ENCODE measurements at regions of chr1 and their contacts with region 1.

Region 1: GRCh38 chr1:12040457-12041051 is 21.3 kb downstream of the MIIP start:
- DNase-seq: peak; percentile 96
- H3K4me3 ChIP-seq: peak overlapping the region; percentile 44
- H3K27ac ChIP-seq: peak overlapping the region; percentile 86
- H3K4me1 ChIP-seq: peaks cover 59% of the 10 kb centered on the region
- CTCF ChIP-seq: no peak

Region 2: DNA sequence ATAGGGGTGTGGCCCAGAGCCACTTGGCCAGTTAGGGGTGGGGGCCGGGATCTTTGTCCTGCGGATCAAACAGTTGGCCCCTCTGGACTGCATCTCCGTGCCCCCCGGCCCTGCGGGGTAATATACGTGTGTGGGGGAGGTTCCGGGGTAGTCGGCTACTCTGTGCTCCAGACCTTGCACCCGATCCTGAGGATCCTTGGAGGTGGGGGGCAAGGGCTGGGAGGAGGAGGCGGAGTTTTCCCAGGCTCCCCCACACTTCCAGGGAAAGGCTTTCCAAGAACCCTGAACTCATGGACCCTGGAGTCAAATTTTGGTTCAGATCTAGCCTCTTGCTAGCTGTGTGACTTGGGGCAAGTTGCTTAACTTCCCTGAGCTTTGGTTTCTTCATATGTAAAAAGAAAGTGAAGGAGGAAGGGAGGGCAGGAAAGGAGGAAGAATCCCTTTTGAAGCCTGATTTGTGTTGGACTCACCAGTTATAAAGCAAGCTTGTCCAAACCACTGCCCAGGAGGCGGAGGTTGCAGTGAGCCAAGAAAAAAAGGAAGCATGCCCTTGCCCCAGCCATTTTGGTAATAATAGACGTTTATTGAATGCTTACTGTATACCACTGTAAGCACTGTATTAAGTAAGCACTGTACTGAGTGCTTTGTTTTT is 20.6 kb before region 1 on chr1:
- CTCF ChIA-PET with region 1: interaction called, 4 read pairs
- POLR2A ChIA-PET with region 1: interaction called, 35 read pairs
- intact Hi-C with region 1: loop called (anchors 1 kb)
- DNase-seq: no peak
- H3K4me3 ChIP-seq: peak overlapping the region; percentile 77
- H3K27ac ChIP-seq: peak overlapping the region; percentile 11
- H3K4me1 ChIP-seq: peaks cover 7% of the 10 kb centered on the region
- CTCF ChIP-seq: no peak

Region 3: DNA sequence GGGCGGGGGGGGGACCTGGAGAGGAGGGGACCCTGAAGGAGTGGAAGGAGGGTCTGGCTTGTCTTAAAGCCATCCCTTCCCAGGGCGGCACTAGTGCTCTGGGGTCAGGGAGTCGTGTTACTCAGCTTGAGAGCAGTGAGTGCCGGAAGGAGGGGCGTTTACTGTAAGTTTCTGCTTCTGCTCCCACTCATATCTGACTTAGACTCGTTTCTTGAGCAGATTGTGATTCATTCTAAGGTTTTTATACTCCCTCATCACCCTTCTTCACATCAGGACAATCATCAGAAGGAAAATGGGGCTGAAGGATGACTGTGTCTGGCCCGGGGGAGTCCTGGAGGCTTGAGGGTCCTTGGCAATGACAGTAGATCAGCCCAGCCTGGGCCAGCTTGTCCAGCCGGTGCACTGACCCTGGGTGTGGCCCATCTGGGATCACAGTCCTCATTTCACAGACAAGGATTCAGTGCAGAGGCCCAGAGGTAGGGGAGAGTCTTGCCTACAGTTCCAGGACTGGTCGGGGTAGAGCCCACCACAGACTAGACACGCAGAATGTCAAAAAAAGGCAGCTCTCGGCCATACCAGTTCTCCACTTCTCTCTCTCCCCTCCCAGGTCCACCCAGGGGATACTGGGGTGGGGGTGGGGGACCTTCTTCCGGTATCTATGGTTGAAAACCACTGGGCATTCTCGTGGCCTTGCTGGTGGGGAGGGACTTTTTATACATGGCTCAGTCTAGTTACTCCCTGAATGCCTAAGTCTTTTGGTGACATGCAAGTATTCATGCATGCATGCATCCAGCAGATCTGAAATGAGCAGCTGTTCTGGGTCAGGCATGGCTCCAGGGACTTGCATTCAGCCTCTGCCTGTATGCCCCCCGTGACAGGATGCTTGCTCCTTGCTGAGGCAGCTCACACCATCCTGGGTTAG is 27.6 kb after region 1 on chr1:
- CTCF ChIA-PET with region 1: no interaction called
- POLR2A ChIA-PET with region 1: no interaction called
- intact Hi-C with region 1: no loop called
- DNase-seq: no peak
- H3K4me3 ChIP-seq: no peak overlapping the region
- H3K27ac ChIP-seq: no peak overlapping the region
- H3K4me1 ChIP-seq: peaks cover 7% of the 10 kb centered on the region
- CTCF ChIP-seq: no peak

Region 4: DNA sequence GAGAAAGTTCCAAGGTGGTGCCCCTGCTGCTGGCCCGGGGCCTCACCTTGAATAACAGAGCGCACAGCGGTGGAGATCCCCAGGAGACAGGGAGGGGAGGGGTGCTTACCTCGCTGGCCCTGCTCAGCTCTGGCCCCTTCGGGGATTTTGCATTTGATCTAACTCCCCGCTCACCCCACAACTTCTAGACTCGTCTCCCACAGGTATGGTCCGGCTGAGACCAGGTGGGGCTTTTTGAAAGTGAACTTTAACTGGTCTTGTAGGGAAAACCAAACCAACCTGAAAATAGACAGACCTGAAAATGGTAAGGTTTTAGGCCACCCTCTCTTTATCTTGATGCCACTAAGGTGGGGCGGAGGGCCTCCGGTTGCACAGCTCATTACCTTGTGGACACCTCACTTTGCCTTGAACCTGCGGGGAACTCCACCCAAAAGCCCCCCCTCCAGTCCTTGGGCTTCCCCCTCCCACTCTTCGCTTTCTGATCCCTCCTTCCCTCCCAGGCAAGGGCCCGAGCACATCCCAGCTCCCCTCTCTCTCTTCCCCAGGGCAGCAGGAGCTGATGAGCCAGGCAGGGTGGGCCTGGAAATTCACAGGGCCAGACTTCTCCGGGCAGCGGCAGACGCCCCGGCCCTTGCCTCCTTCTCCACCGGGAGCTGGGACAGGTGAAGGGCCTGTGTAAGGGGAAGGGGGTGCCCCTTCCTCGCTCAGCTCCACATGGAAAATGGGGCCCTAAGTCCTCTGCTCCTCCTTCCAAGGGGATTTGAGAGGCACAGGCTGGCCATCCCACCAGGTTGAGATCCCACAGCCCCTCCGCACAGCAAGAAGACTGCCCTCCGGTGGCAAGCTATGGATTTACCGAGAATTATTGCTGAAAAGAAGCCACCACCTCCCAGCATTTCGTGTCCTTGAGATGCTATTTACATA is 38.6 kb after region 1 on chr1:
- CTCF ChIA-PET with region 1: no interaction called
- POLR2A ChIA-PET with region 1: interaction called, 5 read pairs
- intact Hi-C with region 1: loop called (anchors 1 kb)
- DNase-seq: peak; percentile 70
- H3K4me3 ChIP-seq: no peak overlapping the region
- H3K27ac ChIP-seq: no peak overlapping the region
- H3K4me1 ChIP-seq: peaks cover 20% of the 10 kb centered on the region
- CTCF ChIP-seq: peak; percentile 82

Region 5: DNA sequence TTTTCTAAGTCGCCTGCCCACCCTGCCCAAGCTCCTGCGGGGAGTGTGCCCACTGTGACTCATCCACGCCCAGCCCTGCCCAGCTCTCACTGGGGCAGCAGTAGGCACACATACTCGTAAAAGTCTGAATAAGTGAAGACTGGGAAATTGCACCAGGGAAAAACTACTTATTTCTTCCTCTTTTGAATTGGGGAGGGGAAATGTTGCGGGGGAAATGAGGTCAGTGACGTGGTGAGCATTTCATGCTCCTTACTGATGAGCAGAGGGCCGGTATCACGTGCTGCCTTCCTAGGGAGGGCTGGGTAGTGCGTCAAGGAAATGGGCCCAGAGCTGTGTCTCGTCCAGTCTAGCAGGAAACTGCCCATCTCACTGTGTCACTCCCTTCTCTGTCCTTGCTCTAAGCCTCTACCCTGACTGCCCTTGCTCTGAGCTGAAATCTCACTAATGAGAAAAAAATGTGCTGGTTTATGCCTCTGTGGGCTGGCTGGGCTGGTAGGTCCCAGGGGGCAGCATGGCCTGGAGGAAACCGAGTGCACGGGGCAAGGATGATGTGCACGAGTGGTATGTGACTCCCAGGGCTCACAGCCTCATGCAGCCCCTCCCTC is 112.7 kb after region 1 on chr1:
- CTCF ChIA-PET with region 1: no interaction called
- POLR2A ChIA-PET with region 1: no interaction called
- intact Hi-C with region 1: loop called (anchors 5 kb)
- DNase-seq: peak; percentile 35
- H3K4me3 ChIP-seq: no peak overlapping the region
- H3K27ac ChIP-seq: peak overlapping the region; percentile 85
- H3K4me1 ChIP-seq: peaks cover 68% of the 10 kb centered on the region
- CTCF ChIP-seq: no peak

Region 6: DNA sequence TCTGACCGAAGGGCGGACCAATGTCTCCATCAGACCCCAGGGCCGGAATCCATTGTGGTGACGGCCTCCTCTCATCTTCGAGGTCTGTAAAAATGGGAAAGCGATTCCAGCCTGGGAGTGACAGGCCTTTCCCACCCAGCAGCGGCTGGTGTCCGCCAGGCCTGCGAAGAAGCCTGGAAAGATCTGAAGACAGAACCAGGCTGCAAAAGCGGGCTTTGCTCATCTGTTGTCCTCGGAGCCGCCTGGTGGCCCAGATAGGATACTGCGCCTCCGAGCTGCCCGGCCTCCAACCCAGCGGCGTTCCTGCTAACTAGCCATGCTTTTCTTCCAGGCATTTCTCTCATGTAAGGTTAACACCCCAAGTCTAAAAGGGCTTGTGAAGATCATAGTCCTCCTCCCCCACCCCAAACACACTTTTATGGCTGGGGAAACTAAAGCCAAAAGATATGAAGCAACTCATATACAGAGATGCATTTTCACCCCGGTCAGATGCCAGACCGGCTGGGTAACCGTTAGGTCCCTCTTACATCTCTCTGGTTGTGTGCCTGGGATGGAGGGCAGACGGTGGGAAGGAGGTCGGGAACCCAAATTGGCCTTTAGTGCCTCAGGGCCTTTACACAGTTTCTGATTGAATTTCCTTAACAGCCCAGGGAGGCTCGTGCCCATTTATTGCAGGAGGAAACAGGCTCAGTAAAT is 579.4 kb after region 1 on chr1:
- CTCF ChIA-PET with region 1: no interaction called
- POLR2A ChIA-PET with region 1: no interaction called
- intact Hi-C with region 1: no loop called
- DNase-seq: peak; percentile 59
- H3K4me3 ChIP-seq: no peak overlapping the region
- H3K27ac ChIP-seq: no peak overlapping the region
- H3K4me1 ChIP-seq: no peaks in the 10 kb centered on the region
- CTCF ChIP-seq: peak; percentile 85